Sciatic nerve (tissue), 2 donors: ENCODE measurements at regions of chr11 and their contacts with region 1.

Region 1: GRCh38 chr11:130819625-130820024 is 96.7 kb downstream of the SNX19 start:
- DNase-seq: no peak
- ATAC-seq: no peak

Region 2: DNA sequence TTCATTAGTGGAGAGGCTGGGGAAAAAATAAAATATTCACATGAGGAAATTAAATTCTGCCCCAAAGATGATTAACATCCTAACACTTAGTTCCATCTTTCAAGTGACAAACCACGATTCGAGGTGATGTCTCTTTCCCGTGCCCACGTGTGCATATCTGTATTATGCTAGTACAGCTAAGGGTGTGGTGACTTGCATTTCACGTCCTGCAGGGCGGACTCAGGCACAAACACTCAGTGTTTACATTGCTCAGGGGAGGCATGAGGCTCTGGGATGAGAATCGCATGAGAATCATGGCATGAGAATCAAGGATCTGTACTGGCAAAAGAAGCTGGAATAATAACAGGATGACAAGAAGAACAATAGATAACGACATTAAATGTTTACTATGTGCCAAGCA is 730.1 kb after region 1 on chr11:
- intact Hi-C with region 1: loop called (anchors 5 kb)
- DNase-seq: no peak
- ATAC-seq: no peak